Naive thymus-derived CD8-positive, alpha-beta T cell (primary cell): ENCODE measurements at regions of chr2 and their contacts with region 1.

Region 1: DNA sequence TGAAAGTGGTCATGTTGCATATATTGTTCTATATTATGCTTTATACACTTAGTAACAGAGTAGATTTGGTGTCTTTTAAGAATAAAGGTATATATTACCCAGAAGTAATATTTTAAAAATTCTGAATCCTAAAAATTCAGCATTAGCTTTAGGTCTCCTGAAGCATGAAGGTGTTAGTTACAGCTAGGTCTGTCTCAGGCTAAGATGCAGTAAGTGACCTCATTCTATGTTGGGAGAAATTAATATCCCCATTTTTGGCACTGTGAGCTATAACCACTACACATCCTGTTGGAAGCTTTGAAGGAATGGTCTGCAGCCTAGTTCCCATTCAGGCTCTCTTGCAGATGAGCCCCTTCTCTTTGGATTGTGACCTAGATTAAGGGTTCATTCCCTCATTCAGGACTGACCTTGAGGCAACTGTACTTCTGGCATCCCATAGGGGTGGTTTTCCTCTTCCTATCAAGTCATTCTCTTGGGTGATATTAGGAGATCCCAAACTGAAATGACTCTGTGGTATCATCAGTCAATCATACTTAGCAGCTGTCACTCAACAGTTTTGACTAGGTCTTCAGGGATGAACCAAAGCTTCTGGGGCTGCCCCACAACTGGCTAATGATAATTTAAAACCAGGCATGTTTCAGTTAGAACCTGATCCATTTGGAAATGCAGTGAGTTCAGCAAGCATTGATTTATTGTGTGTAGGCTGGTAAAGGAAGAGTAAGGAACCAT is 117.7 kb downstream of the GPD2 start:
- DNase-seq: no peak
- ATAC-seq: no peak
- H3K4me3 Mint-ChIP-seq: no peak overlapping the region
- H3K27ac Mint-ChIP-seq: no peak overlapping the region
- H3K4me1 Mint-ChIP-seq: no peaks in the 10 kb centered on the region
- H3K27me3 Mint-ChIP-seq: no peaks in the 10 kb centered on the region

Region 2: GRCh38 chr2:156325688-156326525 is 228.0 kb before region 1 on chr2:
- POLR2A ChIA-PET with region 1: interaction called, 10 read pairs
- DNase-seq: peak in 3 of 10 donors; percentile 12 to 30 (median 24)
- ATAC-seq: no peak
- H3K4me3 Mint-ChIP-seq: peak overlapping the region in 1 of 10 donors; percentile 20
- H3K27ac Mint-ChIP-seq: peak overlapping the region in 2 of 10 donors; percentile 90 to 92
- H3K4me1 Mint-ChIP-seq: peaks cover 32 to 51% (median 45%) of the 10 kb centered on the region in 4 donors
- H3K27me3 Mint-ChIP-seq: peaks cover 49 to 92% (median 74%) of the 10 kb centered on the region in 5 donors

Region 3: GRCh38 chr2:156589381-156590079 is 35.7 kb after region 1 on chr2:
- POLR2A ChIA-PET with region 1: no interaction called
- DNase-seq: peak in 7 of 10 donors; percentile 3 to 56 (median 46)
- ATAC-seq: peak; percentile 39 to 59
- H3K4me3 Mint-ChIP-seq: no peak overlapping the region
- H3K27ac Mint-ChIP-seq: peak overlapping the region in 1 of 10 donors; percentile 60
- H3K4me1 Mint-ChIP-seq: peaks cover 0 to 2% (median 0%) of the 10 kb centered on the region in 4 donors
- H3K27me3 Mint-ChIP-seq: no peaks in the 10 kb centered on the region

Region 4: DNA sequence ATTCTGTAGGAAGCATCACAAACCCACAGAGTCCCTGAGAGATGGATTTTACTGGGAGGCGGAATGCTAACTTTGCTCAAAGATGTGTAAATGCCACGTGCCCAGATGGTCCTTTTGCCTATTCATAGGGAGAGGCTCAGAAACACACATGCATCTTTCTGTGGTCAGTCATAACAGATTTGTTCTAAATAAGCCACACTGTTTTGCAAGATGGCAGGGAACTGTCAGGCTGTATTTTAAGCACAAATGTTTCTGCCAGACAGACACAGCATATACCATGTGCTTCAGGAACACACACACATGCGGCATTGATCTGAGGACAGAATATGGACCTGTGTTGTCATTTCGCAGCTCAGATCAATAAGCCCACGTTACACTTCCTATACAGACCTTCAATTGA is 194.3 kb after region 1 on chr2:
- POLR2A ChIA-PET with region 1: no interaction called
- DNase-seq: no peak
- ATAC-seq: no peak
- H3K4me3 Mint-ChIP-seq: no peak overlapping the region
- H3K27ac Mint-ChIP-seq: no peak overlapping the region
- H3K4me1 Mint-ChIP-seq: no peaks in the 10 kb centered on the region
- H3K27me3 Mint-ChIP-seq: peaks cover 0 to 9% (median 0%) of the 10 kb centered on the region in 5 donors